Caco-2 (cell line): ENCODE measurements at regions of chr19 and their contacts with region 1.

Region 1: DNA sequence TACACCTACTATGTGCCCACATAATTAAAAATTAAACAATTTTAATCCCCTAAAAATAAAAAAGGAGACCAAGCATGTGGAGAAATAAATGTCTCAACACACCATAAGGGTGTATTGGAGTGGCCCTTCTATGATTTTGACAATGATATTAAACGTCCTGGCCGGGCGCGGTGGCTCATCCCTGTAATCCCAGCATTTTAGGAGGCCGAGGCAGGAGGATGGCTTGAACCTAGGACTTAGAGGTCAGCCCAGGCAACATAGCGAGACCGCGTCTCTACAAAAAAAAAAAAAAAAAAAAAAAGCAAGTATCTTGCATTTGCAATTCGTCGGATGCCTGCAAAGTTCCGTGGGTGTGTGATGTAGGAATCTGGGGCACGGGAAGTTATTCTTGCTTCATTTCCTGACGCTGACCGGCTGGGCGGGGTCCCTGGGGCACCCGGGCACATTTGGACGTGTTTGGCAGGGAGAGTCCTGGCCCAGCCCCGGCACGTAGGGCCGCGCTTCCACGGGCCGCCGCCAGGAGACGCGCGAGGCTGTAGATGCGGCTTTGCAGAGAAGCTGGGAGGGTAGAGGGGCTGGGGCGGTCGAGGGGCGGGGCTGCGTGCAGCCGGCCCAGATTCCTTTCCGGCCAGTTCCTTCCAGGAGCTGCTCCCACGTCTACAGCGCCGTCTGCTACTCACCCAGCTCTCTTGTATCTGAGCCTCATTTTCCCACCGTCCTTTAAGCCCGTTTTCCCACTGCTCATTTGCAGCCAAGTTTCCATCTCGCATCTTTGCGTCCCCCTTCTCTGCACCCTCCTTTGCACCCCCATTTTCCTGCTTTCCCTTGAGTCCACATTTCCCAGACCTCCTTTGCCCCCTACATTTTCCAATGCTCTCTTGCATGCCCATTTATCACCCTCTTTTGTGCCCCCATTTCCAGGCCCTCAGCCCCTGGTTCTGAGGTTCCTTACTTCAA is 2.2 kb upstream of the TSPAN16 start:
- DNase-seq: peak; percentile 92 to 97
- H3K4me3 ChIP-seq: peak overlapping the region; percentile 29
- H3K4me3 Mint-ChIP-seq: peak overlapping the region; percentile 66
- H3K27ac Mint-ChIP-seq: peak overlapping the region; percentile 58
- H3K4me1 ChIP-seq: no peaks in the 10 kb centered on the region
- H3K4me1 Mint-ChIP-seq: peaks cover 14% of the 10 kb centered on the region
- H3K27me3 ChIP-seq: no peaks in the 10 kb centered on the region
- H3K27me3 Mint-ChIP-seq: no peaks in the 10 kb centered on the region
- CTCF ChIP-seq: peak; percentile 96 to 99

Region 2: DNA sequence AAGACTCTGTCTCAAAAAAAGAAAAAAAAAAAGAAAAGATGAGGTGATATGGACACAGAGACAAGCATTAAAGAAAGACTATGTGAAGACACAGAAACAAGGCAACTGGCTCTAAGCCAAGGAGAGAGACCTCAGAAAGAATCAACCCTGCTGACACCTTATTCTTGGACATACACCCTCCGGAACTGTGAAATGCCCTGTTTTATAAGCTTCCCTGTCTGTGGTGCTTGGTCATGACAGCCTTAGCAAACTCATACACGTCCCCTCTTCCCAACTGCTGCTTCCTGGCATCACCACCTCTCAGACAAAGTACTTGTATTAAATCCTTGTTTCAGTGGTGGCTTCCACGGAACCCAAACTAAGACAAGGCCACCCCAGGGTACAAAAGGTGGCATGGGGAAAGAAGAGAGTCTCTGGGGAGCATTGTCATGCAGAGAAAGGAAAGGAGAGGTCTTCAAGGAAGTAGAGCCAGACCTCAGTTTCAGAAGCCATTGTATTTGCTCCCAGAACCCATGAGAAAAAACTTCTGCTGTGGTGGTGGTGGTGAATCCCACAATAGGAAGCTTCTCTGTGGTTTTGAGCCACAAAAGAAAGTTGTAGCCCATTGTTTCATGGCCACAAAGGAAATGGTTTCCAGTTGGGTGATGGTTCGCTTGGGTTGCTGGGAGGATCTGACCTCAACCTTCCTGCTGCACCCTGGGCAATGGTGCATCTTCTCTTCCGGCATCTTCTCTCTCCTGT is 14.0 kb before region 1 on chr19:
- CTCF ChIA-PET with region 1: interaction called, 10 read pairs
- POLR2A ChIA-PET with region 1: no interaction called
- intact Hi-C with region 1: no loop called
- DNase-seq: no peak
- H3K4me3 ChIP-seq: no peak overlapping the region
- H3K4me3 Mint-ChIP-seq: no peak overlapping the region
- H3K27ac Mint-ChIP-seq: no peak overlapping the region
- H3K4me1 ChIP-seq: peaks cover 17% of the 10 kb centered on the region
- H3K4me1 Mint-ChIP-seq: peaks cover 20% of the 10 kb centered on the region
- H3K27me3 ChIP-seq: no peaks in the 10 kb centered on the region
- H3K27me3 Mint-ChIP-seq: no peaks in the 10 kb centered on the region
- CTCF ChIP-seq: no peak

Region 3: DNA sequence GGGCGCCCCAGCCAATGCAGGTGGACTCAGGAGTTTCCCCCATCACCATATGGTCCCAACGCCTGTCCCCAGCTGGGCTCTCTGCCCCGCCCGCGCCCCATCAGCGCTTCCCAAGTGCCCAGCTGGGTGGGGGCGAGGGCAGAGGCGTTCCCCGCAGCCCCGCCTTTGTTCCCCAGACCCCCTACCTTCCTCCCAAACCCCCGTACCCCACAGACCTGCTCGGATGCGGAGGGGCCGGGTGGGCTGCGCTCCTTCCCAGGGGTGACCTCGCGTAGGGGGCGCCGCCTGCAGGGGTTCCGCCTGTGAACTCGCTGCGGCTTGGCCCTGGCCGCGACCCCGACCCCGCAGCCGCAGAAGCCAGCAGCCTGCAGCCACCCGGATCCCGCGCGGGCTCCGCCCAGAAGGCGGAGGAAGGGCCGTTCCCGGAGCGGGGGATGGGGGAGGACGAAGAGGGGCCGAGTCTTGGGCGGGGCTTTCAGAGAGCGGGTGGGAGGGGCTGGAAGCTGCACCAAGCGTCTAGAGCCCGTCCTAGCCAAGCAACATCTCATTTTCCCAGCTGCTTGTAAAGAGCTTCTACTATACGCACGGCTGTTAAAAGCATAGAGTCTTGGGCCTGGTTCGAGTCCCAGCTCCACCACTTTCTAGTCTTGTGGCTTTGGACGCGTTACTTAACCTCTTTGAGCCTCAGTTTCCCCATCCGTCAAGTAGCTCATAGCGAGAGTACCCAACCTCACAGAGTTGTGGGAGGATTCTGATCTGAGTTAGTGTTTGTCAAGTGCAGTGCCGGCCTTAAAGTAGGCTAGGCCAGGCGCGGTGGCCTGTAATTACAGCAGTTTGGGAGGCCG is 45.8 kb after region 1 on chr19 and contains the start of gene RAB3D:
- CTCF ChIA-PET with region 1: interaction called, 12 read pairs
- POLR2A ChIA-PET with region 1: interaction called, 3 read pairs
- intact Hi-C with region 1: loop called (anchors 1 kb)
- DNase-seq: peak; percentile 91 to 92
- H3K4me3 ChIP-seq: peak within 1 kb of the TSS; percentile 88
- H3K4me3 Mint-ChIP-seq: peak within 1 kb of the TSS; percentile 77
- H3K27ac Mint-ChIP-seq: peak within 1 kb of the TSS; percentile 50
- H3K4me1 ChIP-seq: peaks cover 20% of the 10 kb centered on the region
- H3K4me1 Mint-ChIP-seq: peaks cover 10% of the 10 kb centered on the region
- H3K27me3 ChIP-seq: no peaks in the 10 kb centered on the region
- H3K27me3 Mint-ChIP-seq: no peaks in the 10 kb centered on the region
- CTCF ChIP-seq: no peak
- total RNA-seq, gene RAB3D: 28.0 and 35.2 TPM in 2 replicates

Region 4: GRCh38 chr19:11374433-11375142 is 80.9 kb after region 1 on chr19 and contains the start of gene SWSAP1:
- CTCF ChIA-PET with region 1: interaction called, 30 read pairs
- POLR2A ChIA-PET with region 1: interaction called, 12 read pairs
- intact Hi-C with region 1: loop called (anchors 2 kb)
- DNase-seq: peak; percentile 97 to 98
- H3K4me3 ChIP-seq: peak within 1 kb of the TSS; percentile 85
- H3K4me3 Mint-ChIP-seq: peak within 1 kb of the TSS; percentile 41
- H3K27ac Mint-ChIP-seq: peak within 1 kb of the TSS; percentile 8
- H3K4me1 ChIP-seq: peaks cover 10% of the 10 kb centered on the region; the same call in 1 of the 2 replicates
- H3K4me1 Mint-ChIP-seq: no peaks in the 10 kb centered on the region
- H3K27me3 ChIP-seq: no peaks in the 10 kb centered on the region
- H3K27me3 Mint-ChIP-seq: no peaks in the 10 kb centered on the region
- CTCF ChIP-seq: no peak
- total RNA-seq, gene SWSAP1: 3.7 and 3.9 TPM in 2 replicates

Region 5: GRCh38 chr19:11435058-11435832 is 141.5 kb after region 1 on chr19 and contains the starts of genes ODAD3 and PRKCSH:
- CTCF ChIA-PET with region 1: interaction called, 8 read pairs
- POLR2A ChIA-PET with region 1: no interaction called
- intact Hi-C with region 1: loop called (anchors 2 kb)
- DNase-seq: peak; percentile 99
- H3K4me3 ChIP-seq: peak within 1 kb of the TSS; percentile 86
- H3K4me3 Mint-ChIP-seq: peak within 1 kb of the TSS; percentile 100
- H3K27ac Mint-ChIP-seq: peak within 1 kb of the TSS; percentile 100
- H3K4me1 ChIP-seq: 0 out of 2 replicates have a peak, but pooled peaks cover 3% of the 10 kb centered on the region
- H3K4me1 Mint-ChIP-seq: no peaks in the 10 kb centered on the region
- H3K27me3 ChIP-seq: no peaks in the 10 kb centered on the region
- H3K27me3 Mint-ChIP-seq: no peaks in the 10 kb centered on the region
- CTCF ChIP-seq: peak; percentile 84 to 90
- total RNA-seq, gene ODAD3: not detected in 2 replicates
- total RNA-seq, gene PRKCSH: 412 and 456 TPM in 2 replicates